Heart left ventricle (tissue), 16 donors: ENCODE measurements at regions of chr4 and their contacts with region 1.

Region 1: DNA sequence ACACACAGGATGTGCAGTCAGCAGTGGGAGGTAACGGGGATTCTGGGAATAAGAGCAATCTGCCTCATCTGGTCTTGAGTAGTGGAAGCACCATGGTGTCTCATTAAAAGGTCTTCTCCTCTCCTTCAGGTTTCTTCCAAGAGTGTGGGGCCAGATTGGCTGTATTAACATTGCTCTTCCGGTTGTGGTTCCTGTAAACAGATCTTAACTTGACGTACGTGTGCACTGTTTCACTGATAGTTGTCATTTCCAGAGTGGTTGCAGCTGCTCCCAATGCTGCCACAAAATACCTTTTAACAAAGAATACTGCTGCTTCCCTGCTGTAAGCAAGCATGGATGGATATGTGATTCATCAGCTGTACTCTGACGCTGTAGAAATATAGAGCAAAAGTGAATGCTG is 1443.4 kb upstream of the TENM3 start:
- DNase-seq: no peak
- ATAC-seq: no peak
- H3K4me3 ChIP-seq: no peak overlapping the region
- H3K27ac ChIP-seq: no peak overlapping the region
- H3K4me1 ChIP-seq: no peaks in the 10 kb centered on the region
- H3K27me3 ChIP-seq: peaks cover 0 to 7% (median 0%) of the 10 kb centered on the region in 9 donors
- CTCF ChIP-seq: no peak
- POLR2A ChIP-seq: no peak

Region 2: GRCh38 chr4:180788729-180789128 is 11.1 kb before region 1 on chr4:
- intact Hi-C with region 1: loop called in 1 of 10 experiments (anchors 1 kb)
- DNase-seq: no peak
- ATAC-seq: no peak
- H3K4me3 ChIP-seq: no peak overlapping the region
- H3K27ac ChIP-seq: no peak overlapping the region
- H3K4me1 ChIP-seq: peaks cover 0 to 12% (median 0%) of the 10 kb centered on the region in 12 donors
- H3K27me3 ChIP-seq: no peaks in the 10 kb centered on the region
- CTCF ChIP-seq: no peak
- POLR2A ChIP-seq: no peak